ENCODE measurements at regions of chr5 and their contacts with region 1.

Region 1: DNA sequence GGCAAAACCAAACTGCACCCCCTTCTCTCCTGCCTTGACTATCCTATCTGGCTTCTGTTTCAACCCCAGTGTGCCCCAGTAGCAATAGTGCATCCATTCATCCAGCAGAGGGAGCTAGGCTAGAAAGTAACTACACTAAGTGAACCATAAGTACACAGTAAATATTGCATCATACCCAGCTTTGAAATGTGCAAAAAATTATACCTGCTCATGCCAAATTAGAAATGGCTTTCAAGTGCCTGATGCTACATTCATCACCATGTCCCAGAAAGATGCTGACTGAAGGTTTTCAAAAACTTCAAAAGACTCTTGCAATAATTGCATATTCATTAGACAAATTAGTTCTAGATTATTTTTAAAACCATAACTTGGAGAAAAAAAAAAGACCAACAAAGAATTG is 153.5 kb downstream of the PRELID2 start:
- DNase-seq: peak; percentile 77
- H3K4me3 Mint-ChIP-seq: no peak overlapping the region
- H3K27ac Mint-ChIP-seq: no peak overlapping the region
- H3K4me1 Mint-ChIP-seq: no peaks in the 10 kb centered on the region
- H3K27me3 Mint-ChIP-seq: no peaks in the 10 kb centered on the region

Region 2: DNA sequence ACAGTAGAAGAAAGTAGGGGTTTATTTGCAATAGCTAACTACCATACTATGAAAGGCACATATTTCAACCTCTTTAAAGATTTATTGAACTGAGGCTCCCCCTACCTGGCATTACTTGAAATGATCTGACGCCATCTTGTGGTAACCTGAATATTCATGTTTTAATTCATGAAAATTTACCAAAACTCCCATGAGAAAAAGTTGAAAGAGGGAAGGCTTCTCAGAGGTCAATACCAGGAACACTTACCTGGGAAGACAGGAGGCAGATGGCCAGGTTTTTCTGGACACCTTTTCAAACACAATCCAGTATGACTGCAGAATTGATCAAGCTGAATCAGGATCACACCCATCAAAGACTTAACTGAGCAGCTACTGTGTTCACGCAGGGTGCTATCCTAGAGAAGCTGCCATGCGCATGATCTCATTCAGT is 144.1 kb after region 1 on chr5:
- intact Hi-C with region 1: loop called (anchors 1 kb)
- DNase-seq: peak; percentile 65
- H3K4me3 Mint-ChIP-seq: no peak overlapping the region
- H3K27ac Mint-ChIP-seq: no peak overlapping the region
- H3K4me1 Mint-ChIP-seq: peaks cover 7% of the 10 kb centered on the region
- H3K27me3 Mint-ChIP-seq: no peaks in the 10 kb centered on the region